Activated CD4-positive, alpha-beta memory T cell treated with anti-CD3 and anti-CD28 coated beads for 36 hours (primary cell): ENCODE measurements at regions of chr9 and their contacts with region 1.

Region 1: DNA sequence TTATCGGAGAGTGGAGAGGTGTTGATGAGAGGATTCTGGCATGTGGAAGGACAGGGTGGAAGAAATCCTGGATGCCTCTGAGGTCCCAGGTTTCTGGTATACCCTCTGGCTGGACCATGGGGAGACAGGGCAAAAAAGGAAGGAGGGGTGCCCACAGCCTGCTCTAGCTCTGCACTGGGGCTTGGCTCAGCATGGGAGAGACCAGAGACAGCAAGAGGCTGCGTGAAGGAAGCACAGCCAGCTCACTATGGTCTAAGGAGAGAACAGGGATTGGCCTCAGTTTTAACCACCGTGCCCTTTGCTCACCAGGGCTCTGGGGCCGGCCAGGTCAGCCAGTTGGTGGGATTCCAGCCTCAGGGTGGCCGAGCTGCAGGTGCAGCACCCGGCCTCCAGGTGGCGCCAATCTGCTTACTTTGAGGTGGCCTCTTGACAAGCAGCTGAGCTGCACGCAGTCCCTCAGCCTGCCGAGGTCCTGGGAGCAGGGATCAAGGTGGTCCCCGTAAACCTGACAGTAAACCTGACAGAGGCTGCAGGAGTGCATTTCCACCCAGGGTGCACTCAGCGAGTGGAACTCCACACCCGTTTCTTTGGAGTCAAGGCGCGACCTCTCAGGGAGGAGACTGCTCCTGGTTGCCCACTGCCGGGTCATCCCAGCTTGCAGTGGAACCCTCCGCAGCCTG is 25.0 kb upstream of the SPTLC1 start:
- DNase-seq: peak; percentile 80
- H3K4me3 Mint-ChIP-seq: no peak overlapping the region
- H3K27ac Mint-ChIP-seq: no peak overlapping the region
- H3K4me1 Mint-ChIP-seq: peaks cover 7% of the 10 kb centered on the region
- H3K27me3 Mint-ChIP-seq: peaks cover 28% of the 10 kb centered on the region

Region 2: GRCh38 chr9:91992461-91993041 is 147.7 kb before region 1 on chr9:
- CTCF ChIA-PET with region 1: no interaction called
- POLR2A ChIA-PET with region 1: no interaction called
- intact Hi-C with region 1: no loop called
- DNase-seq: no peak
- H3K4me3 Mint-ChIP-seq: no peak overlapping the region
- H3K27ac Mint-ChIP-seq: no peak overlapping the region
- H3K4me1 Mint-ChIP-seq: no peaks in the 10 kb centered on the region
- H3K27me3 Mint-ChIP-seq: peaks cover 15% of the 10 kb centered on the region

Region 3: DNA sequence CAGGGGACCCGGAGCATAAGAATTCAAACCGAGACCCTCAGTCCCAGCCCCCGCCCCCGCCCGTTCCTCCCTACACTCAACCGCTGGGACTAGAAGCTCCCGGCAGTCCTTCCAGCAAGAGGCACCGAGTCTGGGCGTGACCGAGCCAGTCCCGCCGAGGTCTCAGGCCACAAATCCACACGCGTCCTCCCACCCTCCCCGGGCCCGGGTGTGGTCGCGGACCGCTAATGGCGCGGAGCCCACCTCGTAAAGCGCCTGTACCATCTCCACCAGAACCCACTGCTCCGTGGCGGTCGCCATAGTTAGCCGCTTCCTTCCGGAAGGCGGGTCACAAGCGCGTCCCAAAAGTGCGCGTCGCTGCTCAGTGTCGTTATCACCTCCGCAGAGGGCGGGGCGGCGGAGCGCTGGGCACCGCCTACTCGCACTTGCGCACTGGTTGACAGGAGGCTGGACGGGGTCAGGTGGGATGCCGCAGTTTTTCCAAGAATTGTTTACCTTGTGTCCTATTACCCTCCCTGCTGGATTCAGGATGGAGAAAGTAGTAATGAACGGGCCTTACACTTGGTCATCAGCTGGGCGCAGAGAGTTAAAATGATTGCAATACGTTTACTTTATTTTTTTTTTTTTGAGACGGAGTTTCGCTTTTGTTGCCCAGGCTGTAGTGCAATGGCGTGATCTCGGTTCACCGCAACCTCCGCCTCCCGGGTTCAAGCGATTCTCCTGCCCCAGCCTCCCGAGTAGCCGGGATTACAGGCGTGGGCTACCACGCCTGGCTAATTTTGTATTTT is 24.9 kb before region 1 on chr9 and contains the start of gene SPTLC1:
- CTCF ChIA-PET with region 1: interaction called, 33 read pairs
- POLR2A ChIA-PET with region 1: no interaction called
- intact Hi-C with region 1: no loop called
- DNase-seq: peak; percentile 97
- H3K4me3 Mint-ChIP-seq: peak within 1 kb of the TSS; percentile 97
- H3K27ac Mint-ChIP-seq: peak within 1 kb of the TSS; percentile 94
- H3K4me1 Mint-ChIP-seq: peaks cover 22% of the 10 kb centered on the region
- H3K27me3 Mint-ChIP-seq: no peaks in the 10 kb centered on the region
- total RNA-seq, gene SPTLC1: 39.9 to 41.2 TPM

Region 4: GRCh38 chr9:92242260-92243136 is 102.3 kb after region 1 on chr9:
- CTCF ChIA-PET with region 1: interaction called, 6 read pairs
- POLR2A ChIA-PET with region 1: no interaction called
- intact Hi-C with region 1: loop called (anchors 10 kb)
- DNase-seq: no peak
- H3K4me3 Mint-ChIP-seq: no peak overlapping the region
- H3K27ac Mint-ChIP-seq: no peak overlapping the region
- H3K4me1 Mint-ChIP-seq: peaks cover 10% of the 10 kb centered on the region
- H3K27me3 Mint-ChIP-seq: no peaks in the 10 kb centered on the region

Region 5: DNA sequence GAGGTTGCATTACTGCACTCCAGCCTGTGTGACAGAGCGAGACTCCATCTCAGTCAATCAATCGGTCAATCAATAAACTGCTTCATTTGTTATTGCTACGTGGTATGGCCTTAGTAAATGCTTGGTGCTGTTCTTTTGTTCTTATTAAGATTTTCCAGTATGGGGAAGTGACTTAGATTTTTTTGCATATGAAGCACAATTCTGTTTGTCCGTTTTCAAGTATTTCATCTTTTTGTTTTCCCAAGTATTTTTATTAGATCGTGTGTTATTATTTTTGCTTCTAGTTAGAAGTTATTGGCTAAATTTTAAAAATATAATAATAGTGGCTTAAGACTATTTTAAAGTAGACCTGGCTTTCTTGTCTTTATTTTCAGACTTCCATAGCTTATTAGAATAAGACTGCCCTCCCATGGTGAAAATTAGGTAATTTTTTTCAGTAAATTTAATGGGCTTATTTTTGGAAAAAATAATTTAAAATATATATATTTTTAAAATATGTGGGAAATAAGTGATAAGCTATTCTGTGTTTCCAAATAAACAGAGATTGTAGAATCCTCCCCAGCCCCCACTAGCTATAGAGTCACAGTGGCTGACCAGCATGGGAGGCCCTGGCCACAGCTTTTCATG is 298.8 kb after region 1 on chr9:
- CTCF ChIA-PET with region 1: interaction called, 4 read pairs
- POLR2A ChIA-PET with region 1: no interaction called
- intact Hi-C with region 1: loop called (anchors 5 kb)
- DNase-seq: no peak
- H3K4me3 Mint-ChIP-seq: no peak overlapping the region
- H3K27ac Mint-ChIP-seq: no peak overlapping the region
- H3K4me1 Mint-ChIP-seq: peaks cover 12% of the 10 kb centered on the region
- H3K27me3 Mint-ChIP-seq: no peaks in the 10 kb centered on the region

Region 6: GRCh38 chr9:92669890-92670708 is 529.9 kb after region 1 on chr9 and contains the start of gene IPPK:
- CTCF ChIA-PET with region 1: interaction called, 10 read pairs
- POLR2A ChIA-PET with region 1: no interaction called
- intact Hi-C with region 1: no loop called
- DNase-seq: peak; percentile 99
- H3K4me3 Mint-ChIP-seq: peak within 1 kb of the TSS; percentile 95
- H3K27ac Mint-ChIP-seq: peak within 1 kb of the TSS; percentile 85
- H3K4me1 Mint-ChIP-seq: peaks cover 35% of the 10 kb centered on the region
- H3K27me3 Mint-ChIP-seq: no peaks in the 10 kb centered on the region
- total RNA-seq, gene IPPK: 10.8 to 11.0 TPM

Region 7: DNA sequence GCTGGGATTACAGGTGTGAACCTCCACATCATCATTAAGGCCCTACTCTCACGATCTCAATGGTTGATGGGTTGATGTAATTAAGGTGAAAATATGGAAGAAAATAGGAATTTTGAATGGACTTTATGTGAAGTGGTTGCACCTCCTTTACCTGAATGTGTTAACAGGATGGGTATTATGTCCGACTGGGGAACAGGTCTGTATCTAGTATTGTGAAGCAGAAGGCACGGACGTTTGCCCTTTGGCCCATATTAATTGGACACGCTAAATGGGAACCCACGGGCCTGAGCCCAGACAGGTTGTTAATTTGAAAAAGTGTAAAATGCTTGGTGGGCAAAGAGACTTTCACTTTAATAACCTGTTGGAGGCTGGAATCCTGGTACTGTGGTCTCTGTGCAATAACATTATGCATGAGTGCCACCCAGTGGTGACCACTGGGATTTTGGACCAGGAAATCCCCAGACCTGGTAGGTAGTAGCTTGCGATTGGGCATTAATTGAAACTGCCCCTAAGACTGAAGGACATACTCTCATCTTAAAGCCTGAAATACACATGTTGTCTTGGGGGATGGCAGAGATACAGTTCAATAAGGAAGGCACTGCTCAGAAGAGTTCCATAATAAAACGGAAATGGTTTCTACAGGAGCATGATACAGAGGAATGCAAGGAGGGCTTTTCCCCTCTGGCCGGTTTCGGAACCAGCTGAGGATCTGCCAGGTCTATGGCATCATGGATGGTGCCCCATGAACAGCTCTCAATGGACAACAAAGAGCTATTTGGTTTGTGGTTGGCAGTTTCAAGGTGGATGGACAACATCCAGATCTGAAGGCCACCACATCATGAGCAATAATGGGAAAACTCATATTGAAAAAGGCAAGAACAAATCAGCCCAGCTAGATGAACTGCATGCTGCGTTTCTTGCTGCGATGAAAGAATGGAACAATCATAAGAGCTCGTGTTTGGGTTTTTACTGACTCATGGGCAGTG is 650.6 kb after region 1 on chr9:
- CTCF ChIA-PET with region 1: interaction called, 19 read pairs
- POLR2A ChIA-PET with region 1: no interaction called
- intact Hi-C with region 1: loop called (anchors 5 kb)
- DNase-seq: peak; percentile 78
- H3K4me3 Mint-ChIP-seq: peak overlapping the region; percentile 6
- H3K27ac Mint-ChIP-seq: peak overlapping the region; percentile 39
- H3K4me1 Mint-ChIP-seq: peaks cover 12% of the 10 kb centered on the region
- H3K27me3 Mint-ChIP-seq: no peaks in the 10 kb centered on the region